OCI-LY7 (cell line): ENCODE measurements at regions of chr6 and their contacts with region 1.

Region 1: DNA sequence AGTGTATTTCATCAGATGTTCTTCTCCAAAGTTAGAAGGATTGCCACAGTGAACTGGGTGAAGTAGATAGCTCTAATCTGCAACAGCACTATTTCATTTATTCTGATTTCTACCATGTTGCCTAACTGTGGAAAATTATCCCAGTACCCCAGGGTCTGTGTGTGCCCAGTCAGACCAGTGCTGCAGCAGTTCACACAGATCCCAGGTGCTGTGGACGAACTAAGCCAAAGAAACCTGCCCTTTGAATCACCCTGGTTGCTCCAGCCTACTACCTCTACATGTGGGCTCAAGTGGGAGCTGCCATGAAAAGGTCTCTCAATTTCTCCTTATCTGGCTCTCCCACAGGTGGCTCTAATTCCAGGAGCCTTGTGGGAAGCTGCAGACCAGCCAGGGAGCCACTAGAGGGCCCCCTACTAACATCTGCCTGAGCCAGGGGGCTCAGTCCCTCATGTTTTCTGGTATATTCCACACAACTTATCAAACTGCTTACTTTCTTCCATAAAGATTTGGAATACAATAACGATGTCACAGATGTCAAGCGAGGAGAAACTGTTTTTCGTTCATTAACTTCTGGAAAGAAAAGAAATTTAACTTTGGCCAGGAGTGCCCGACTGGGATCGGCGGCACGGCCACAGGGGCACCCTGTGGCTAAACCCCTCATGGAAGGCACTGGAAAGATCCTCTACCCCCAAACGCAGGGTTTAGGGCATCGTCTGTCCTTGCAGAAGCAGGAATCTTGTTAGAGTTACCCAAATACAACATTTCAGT is 31.6 kb upstream of the LY86 start:
- DNase-seq: peak; percentile 74
- H3K4me3 ChIP-seq: no peak overlapping the region
- H3K27ac ChIP-seq: no peak overlapping the region
- H3K4me1 ChIP-seq: no peaks in the 10 kb centered on the region
- CTCF ChIP-seq: peak; percentile 99

Region 2: DNA sequence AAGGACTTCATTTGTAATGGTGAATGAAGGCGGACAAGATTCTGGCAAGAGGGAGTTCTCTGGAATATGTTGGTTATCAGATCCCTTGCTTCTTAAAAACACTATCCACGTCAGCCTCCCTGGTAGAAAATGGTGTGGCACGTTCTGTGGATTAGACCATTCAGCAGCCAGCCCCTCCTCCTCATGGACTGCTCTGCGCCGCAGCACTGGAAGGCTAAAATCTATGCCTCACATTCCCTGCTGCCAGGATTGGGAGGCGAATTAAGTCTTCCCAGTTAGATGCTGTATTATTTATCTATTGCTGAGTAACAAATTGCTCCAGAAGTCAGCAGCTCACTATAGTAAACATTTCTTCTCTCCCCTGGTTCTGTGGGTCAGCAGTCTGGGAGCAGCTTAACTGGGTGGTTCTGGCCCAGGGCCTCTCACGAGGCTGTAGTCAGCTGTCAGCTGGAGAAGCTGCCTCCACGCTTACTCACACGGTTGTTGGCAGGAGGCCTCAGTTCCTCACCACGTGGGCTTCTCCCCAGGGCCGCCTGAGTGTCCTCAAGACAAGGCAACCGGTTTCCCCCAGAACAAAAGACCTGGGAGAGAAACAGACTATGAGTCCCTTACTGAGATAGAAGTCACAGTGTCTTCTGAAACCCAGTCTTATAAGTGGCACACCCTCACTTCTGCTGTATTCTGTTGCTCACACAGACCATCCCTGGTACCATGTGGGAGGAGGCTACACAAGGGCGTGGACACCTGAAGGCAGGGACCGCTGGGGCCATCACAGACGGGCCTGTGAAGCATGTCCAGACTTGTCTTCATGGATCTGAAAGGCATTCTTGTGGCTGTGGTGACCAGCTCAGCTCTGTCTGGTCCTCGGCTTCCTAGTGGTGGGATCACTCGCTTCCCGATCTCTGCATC is 651.2 kb before region 1 on chr6:
- CTCF ChIA-PET with region 1: no interaction called
- POLR2A ChIA-PET with region 1: no interaction called
- intact Hi-C with region 1: no loop called
- DNase-seq: no peak
- H3K4me3 ChIP-seq: no peak overlapping the region
- H3K27ac ChIP-seq: no peak overlapping the region
- H3K4me1 ChIP-seq: no peaks in the 10 kb centered on the region
- CTCF ChIP-seq: no peak

Region 3: DNA sequence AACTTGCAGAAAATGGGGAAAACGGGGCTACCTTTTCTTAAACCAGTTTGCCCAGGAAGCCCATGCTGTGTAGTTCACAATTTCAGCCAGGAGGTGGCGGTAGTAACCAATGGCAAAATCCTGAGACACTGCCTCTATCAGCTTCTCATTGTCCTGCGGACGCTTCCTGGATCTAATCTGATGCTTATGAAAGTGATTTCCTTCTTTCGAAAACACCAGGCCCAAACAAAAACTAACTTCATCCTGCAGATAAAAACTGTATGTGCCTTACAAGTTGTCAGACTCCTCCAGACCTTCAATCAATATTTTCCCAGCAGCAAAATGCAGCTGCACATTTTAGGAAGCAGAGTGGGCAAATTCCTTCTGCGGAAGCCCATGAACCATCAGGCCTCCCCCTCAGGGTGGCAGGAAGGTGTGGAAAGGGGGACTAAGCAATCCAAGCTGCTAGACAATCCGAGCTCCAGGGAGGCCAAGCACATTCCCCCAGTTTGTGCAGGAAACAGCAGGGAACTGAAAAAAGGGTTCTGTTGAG is 120.1 kb after region 1 on chr6:
- CTCF ChIA-PET with region 1: no interaction called
- POLR2A ChIA-PET with region 1: no interaction called
- intact Hi-C with region 1: loop called (anchors 2 kb)
- DNase-seq: peak; percentile 79
- H3K4me3 ChIP-seq: no peak overlapping the region
- H3K27ac ChIP-seq: no peak overlapping the region
- H3K4me1 ChIP-seq: peaks cover 4% of the 10 kb centered on the region
- CTCF ChIP-seq: peak; percentile 98